ENCODE measurements at regions of chr22 and their contacts with region 1.

Region 1: GRCh38 chr22:19629720-19630419 is 84.4 kb upstream of the SEPTIN5 start:
- DNase-seq: peak; percentile 60 to 94
- H3K4me3 ChIP-seq: no peak overlapping the region
- H3K27ac ChIP-seq: no peak overlapping the region
- H3K4me1 ChIP-seq: peaks cover 0 to 10% (median under 1%) of the 10 kb centered on the region in 4 experiments; a peak in 3 of 7 replicates
- H3K27me3 ChIP-seq: no peaks in the 10 kb centered on the region
- CTCF ChIP-seq: peak; percentile 87 to 96 (median 93)
- EP300 ChIP-seq: no peak
- POLR2A ChIP-seq: no peak
- RAD21 ChIP-seq: peak; percentile 96 to 99

Region 2: DNA sequence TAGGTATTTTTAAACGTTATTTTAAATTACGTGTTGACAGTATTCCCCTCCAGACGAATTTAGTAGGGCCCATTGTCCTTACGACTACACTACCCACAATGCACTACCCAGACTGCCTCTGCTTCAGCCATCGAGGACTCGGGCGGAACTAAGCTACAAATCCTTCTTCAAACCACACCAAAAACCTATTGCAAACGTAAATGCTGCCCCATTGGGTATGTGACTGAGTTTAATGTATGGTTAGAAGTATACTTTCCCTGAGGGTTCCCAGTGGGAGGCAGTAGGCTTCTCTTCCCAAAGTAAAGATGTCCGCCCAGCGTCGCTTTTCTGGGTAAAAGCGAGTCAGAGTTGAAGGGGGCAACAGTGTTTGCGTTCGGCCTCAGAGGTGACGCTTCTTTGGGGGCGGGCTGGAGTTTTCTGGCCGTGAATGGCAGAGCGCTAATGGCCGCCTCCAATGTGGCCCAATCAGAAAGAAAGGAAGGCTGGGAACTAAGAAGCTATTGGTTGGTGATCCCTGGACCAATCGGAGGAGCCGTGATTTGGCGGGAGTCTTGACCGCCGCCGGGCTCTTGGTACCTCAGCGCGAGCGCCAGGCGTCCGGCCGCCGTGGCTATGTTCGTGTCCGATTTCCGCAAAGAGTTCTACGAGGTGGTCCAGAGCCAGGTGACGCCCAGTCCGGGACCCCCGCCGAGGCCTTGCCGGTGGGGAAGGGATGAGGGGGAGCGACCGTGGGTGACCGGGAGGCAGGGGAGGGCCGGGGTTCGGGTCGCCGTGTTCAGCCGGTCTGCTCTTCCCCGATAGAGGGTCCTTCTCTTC is 150.3 kb before region 1 on chr22 and contains the start of gene CDC45:
- CTCF ChIA-PET with region 1: interaction called, 14 read pairs
- POLR2A ChIA-PET with region 1: interaction called, 4 read pairs
- DNase-seq: peak; percentile 88
- H3K4me3 ChIP-seq: peak within 1 kb of the TSS; percentile 87 to 99 (median 94)
- H3K27ac ChIP-seq: peak within 1 kb of the TSS; percentile 100
- H3K4me1 ChIP-seq: peaks cover 0 to 8% (median 1%) of the 10 kb centered on the region in 4 experiments; a peak in 2 of 7 replicates
- H3K27me3 ChIP-seq: no peaks in the 10 kb centered on the region
- CTCF ChIP-seq: no peak
- EP300 ChIP-seq: no peak
- POLR2A ChIP-seq: peak; percentile 73 to 86
- RAD21 ChIP-seq: no peak
- total RNA-seq, gene CDC45: 31.9 and 32.6 TPM in 2 replicates

Region 3: DNA sequence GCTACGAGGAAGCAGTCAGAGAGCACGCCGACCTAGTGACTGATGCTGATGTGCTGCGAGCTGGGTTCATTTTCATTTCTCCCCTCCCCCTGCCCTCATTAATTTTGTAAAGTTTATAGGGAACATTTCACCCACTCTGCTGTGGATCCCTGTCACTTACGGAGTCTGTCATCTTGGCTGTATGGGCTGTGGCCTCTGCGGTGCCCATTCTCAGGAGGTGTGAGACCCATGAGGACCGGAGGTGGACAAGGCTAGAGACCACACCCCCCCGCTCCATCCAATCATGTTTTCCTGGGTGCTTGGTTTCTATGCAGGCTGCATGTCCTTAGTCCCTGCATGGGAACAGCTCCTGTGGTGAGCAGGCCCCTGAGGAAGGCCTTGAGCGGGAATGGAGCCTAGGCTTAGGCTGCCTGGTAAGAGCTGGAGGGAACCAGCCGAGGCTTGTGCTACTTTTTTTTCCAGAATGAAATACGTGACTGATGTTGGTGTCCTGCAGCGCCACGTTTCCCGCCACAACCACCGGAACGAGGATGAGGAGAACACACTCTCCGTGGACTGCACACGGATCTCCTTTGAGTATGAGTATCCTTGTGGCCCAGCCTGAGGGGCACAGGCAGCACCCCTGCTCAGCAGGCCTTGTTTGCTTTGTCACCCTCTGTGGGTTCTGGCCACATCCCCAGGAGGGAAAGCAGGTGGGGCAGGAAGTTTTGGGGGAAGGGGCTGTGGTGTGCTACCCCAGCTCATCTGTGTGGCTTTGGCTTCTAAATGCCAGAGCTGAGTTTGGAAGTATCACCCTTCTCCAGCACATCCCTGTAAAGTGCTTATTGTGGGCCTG is 124.8 kb before region 1 on chr22:
- CTCF ChIA-PET with region 1: interaction called, 21 read pairs
- POLR2A ChIA-PET with region 1: interaction called, 3 read pairs
- DNase-seq: no peak
- H3K4me3 ChIP-seq: no peak overlapping the region
- H3K27ac ChIP-seq: no peak overlapping the region
- H3K4me1 ChIP-seq: no peaks in the 10 kb centered on the region; a peak in 3 of 7 replicates
- H3K27me3 ChIP-seq: no peaks in the 10 kb centered on the region
- CTCF ChIP-seq: no peak
- EP300 ChIP-seq: no peak
- POLR2A ChIP-seq: no peak
- RAD21 ChIP-seq: no peak

Region 4: GRCh38 chr22:19554834-19555404 is 75.0 kb before region 1 on chr22:
- CTCF ChIA-PET with region 1: interaction called, 17 read pairs
- POLR2A ChIA-PET with region 1: interaction called, 3 read pairs
- DNase-seq: peak; percentile 41 to 70
- H3K4me3 ChIP-seq: no peak overlapping the region
- H3K27ac ChIP-seq: no peak overlapping the region; the same call in 1 of the 2 replicates
- H3K4me1 ChIP-seq: peaks cover 0 to 5% (median 1%) of the 10 kb centered on the region in 4 experiments; a peak in 6 of 7 replicates
- H3K27me3 ChIP-seq: peaks cover 0 to 2% (median 0%) of the 10 kb centered on the region in 4 experiments; a peak in 1 of 7 replicates
- CTCF ChIP-seq: peak; percentile 34 to 59 (median 45)
- EP300 ChIP-seq: peak in 1 of 2 experiments; percentile 58; a peak in 1 of 3 replicates
- POLR2A ChIP-seq: no peak
- RAD21 ChIP-seq: peak; percentile 8 to 37; a peak in 2 of 4 replicates

Region 5: DNA sequence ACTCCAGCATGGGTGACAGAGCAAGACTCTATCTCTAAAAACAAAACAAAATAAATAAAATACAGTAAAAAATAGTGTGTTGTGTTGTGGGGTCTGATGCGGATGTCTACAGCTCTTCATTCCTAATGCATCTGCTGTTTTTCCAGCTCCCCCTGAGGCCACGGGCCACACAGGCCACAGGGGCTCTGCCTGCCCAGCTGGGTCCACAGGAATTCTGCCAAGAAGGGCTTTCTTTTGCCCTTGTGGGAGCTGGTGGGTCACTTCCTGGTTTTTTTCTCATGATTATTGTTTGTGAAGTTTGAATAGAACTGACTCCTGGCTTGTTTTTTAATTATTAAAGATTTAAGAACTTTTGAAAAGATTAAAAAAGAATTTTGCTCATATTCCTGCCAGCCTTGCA is 38.3 kb before region 1 on chr22:
- CTCF ChIA-PET with region 1: interaction called, 13 read pairs
- POLR2A ChIA-PET with region 1: interaction called, 3 read pairs
- DNase-seq: no peak
- H3K4me3 ChIP-seq: no peak overlapping the region
- H3K27ac ChIP-seq: no peak overlapping the region
- H3K4me1 ChIP-seq: no peaks in the 10 kb centered on the region
- H3K27me3 ChIP-seq: no peaks in the 10 kb centered on the region
- CTCF ChIP-seq: no peak
- EP300 ChIP-seq: no peak
- POLR2A ChIP-seq: no peak
- RAD21 ChIP-seq: no peak

Region 6: GRCh38 chr22:19619144-19620009 is 10.5 kb before region 1 on chr22:
- CTCF ChIA-PET with region 1: interaction called, 17 read pairs
- POLR2A ChIA-PET with region 1: interaction called, 3 read pairs
- DNase-seq: no peak
- H3K4me3 ChIP-seq: no peak overlapping the region
- H3K27ac ChIP-seq: no peak overlapping the region
- H3K4me1 ChIP-seq: peaks cover 5 to 33% (median 18%) of the 10 kb centered on the region in 4 experiments
- H3K27me3 ChIP-seq: no peaks in the 10 kb centered on the region; a peak in 1 of 7 replicates
- CTCF ChIP-seq: no peak
- EP300 ChIP-seq: no peak
- POLR2A ChIP-seq: no peak
- RAD21 ChIP-seq: no peak

Region 7: DNA sequence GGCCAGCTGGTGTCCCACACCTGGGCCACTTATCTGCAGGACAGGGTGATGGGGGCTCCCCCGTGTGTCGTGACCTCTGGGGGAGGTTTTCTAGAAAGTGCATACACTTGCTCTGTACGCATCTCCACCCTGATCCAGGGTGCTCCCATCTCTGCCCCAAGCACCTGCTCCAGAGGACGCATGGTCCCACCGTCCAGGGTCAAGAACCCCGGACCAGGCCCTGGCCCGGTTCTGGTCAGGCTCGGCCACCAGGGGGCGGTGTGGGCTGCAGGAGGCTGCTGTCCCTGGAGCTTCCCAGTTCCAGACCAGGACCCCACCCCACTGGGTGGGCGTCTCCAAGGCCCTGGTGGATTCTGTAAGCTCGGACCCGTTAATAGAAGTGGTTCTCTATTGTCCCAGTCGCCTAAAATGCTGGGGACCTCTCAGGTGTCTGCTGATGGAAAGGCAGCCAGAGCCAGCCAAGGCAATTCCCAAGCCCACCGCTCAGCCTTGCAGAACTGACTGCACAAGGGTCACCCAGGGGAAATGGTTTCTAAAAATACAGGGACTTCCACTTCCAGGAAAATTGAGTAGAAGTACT is 49.7 kb after region 1 on chr22:
- CTCF ChIA-PET with region 1: interaction called, 16 read pairs
- POLR2A ChIA-PET with region 1: no interaction called
- DNase-seq: peak in 1 of 2 experiments; percentile 96
- H3K4me3 ChIP-seq: no peak overlapping the region
- H3K27ac ChIP-seq: no peak overlapping the region
- H3K4me1 ChIP-seq: peaks cover 0 to 3% (median 0%) of the 10 kb centered on the region in 4 experiments; a peak in 3 of 7 replicates
- H3K27me3 ChIP-seq: no peaks in the 10 kb centered on the region; a peak in 2 of 7 replicates
- CTCF ChIP-seq: peak; percentile 80 to 87 (median 85)
- EP300 ChIP-seq: no peak
- POLR2A ChIP-seq: no peak
- RAD21 ChIP-seq: peak; percentile 78 to 88

Region 8: DNA sequence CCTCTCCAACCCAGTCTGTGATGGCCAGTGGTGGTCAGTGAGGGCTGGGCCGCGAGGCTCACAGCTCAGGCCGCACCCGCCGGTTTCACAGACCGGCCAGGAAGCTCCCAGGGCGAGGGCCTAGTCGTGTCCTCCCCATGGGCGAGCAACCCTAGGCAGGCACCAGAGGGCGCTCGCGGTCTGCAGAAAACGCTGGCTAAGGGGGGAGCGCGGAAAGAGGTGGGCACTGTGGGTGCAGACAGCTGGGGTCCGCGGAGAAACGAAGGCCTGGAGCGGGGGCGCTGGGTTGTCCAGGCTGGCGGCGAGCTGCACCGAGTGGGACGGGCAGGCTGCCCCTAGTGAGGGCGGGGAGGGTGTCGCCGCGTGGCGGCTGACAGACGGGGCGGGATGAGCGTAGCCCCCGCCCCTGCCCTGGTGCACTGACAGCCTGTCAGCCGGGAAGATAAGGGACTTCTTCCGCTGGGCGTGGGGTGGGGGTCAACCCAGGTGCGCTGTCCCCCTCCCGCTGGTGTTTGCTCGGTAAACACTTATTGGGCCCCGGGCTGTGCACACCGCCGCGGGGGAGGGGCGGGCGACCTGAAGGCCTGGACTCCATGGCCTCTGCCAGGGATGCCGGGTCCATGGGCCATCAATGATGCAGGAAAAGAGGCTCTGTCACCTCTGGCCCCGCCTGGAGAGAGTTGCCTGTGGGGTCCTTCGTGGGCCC is 100.9 kb after region 1 on chr22:
- CTCF ChIA-PET with region 1: no interaction called
- POLR2A ChIA-PET with region 1: no interaction called
- DNase-seq: peak in 1 of 2 experiments; percentile 97
- H3K4me3 ChIP-seq: peak overlapping the region in 3 of 4 experiments; percentile 13 to 49 (median 29); a peak in 4 of 8 replicates
- H3K27ac ChIP-seq: no peak overlapping the region
- H3K4me1 ChIP-seq: peaks cover 0 to 4% (median 2%) of the 10 kb centered on the region in 4 experiments; a peak in 2 of 7 replicates
- H3K27me3 ChIP-seq: peaks cover 16 to 46% (median 40%) of the 10 kb centered on the region in 4 experiments
- CTCF ChIP-seq: peak; percentile 92 to 94 (median 94)
- EP300 ChIP-seq: no peak
- POLR2A ChIP-seq: no peak
- RAD21 ChIP-seq: peak; percentile 96 to 98